BJ (cell line): ENCODE measurements at regions of chr5 and their contacts with region 1.

Region 1: GRCh38 chr5:188488-189481 is 2.5 kb upstream of the LRRC14B start:
- DNase-seq: no peak
- H3K4me3 ChIP-seq: no peak overlapping the region
- H3K27me3 ChIP-seq: peaks cover 3% of the 10 kb centered on the region
- CTCF ChIP-seq: peak; percentile 96

Region 2: DNA sequence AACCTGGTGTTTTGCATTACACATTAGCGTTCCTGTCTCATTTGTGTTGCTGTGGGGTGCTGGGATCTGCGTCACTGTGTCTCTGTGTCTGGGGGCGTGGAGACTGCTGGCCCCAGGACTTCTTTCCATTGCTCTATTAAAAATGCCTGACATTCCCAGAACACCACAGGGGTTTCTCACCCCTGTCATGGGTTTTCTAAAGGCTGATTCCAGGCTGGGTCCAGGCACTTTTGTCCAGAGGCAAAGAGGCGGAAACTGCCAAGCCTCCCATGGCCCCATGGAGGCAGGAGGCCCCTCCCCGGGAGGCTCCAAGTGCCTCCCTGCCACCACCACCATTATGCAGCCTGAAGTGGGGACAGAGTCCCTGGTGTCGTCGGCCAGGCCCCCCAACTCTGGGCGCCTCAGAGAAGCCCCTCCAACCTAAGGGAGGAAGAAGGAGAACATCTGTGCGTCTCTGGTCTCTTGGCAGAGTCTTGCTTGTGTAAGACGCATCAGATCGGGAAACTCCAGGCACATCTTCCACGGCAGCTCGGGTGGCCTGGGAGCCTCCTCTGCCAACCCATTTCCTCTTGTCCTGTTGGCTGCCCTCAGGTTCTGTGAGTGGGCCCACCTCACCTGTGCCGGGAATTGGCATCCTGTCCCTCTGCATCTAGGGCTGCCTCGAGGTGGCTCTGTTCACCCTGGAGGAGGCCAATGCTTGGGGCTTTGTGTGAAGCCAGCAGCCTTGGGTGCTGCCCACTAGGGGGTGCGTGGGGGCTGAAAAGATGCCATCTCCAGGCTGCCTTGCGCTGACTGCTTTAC is 110.6 kb before region 1 on chr5:
- CTCF ChIA-PET with region 1: interaction called, 10 read pairs
- POLR2A ChIA-PET with region 1: no interaction called
- DNase-seq: peak; percentile 55
- H3K4me3 ChIP-seq: no peak overlapping the region
- H3K27me3 ChIP-seq: peaks cover 4% of the 10 kb centered on the region
- CTCF ChIP-seq: peak; percentile 71

Region 3: DNA sequence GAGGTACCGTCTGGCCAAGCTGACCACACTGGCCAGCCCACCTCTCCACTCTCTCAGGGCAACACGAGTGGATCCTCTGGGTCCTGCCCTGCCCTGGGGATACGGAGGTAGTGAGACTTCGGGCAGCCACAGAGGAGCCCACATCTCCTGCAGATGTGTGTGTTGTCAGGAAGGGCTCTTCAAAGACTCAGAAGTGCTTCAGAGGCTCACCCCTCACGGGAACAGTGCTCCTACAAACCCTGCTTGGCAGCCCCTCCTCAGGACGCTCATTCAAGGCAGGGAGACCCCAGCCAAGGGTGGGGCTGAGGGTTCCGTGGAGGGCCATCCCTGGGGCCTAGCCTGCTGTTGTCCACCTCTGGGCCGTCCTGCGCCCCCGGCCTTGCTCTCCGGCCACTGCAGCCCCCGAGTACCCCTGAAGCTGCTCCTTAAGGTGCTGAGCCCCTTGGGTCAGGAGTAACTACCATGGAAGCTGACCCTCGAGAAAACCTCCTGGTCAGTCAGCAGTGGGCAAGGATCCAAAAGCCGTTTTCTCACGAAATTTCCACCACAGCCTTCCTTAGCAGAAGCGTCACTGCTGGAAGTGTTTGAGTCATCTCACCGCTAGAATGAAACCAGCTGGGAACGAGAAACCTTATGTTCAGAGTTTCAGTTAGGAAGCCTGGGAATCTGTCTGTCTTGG is 20.7 kb before region 1 on chr5:
- CTCF ChIA-PET with region 1: interaction called, 18 read pairs
- POLR2A ChIA-PET with region 1: no interaction called
- DNase-seq: peak; percentile 95
- H3K4me3 ChIP-seq: no peak overlapping the region
- H3K27me3 ChIP-seq: no peaks in the 10 kb centered on the region
- CTCF ChIP-seq: no peak